ENCODE measurements at regions of chr13 and their contacts with region 1.

Region 1: DNA sequence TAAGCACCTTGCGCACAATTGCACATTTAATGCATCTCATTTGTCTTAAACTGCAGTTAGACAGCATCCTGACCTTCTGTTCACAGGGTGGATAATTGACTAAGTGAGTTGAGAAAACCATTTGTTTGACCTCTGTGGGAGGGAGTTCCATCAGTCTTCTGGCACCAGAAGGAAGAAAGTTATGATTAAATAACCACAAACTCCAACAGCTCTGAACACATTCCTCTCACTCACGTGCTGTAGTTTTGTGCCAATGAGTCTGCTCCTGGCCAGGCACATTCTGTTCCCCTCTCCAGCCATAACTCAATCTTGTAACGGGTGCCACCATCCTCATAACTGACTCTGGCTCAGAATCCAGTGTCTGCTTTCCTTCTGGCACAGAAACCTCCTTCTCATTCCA is 817.2 kb downstream of the SLITRK1 start:
- DNase-seq: peak; percentile 93
- H3K4me3 ChIP-seq: no peak overlapping the region
- H3K27ac ChIP-seq: peak overlapping the region; percentile 63 to 76 (median 73)
- H3K4me1 ChIP-seq: peaks cover 0 to 50% (median 21%) of the 10 kb centered on the region in 4 donors
- H3K27me3 ChIP-seq: no peaks in the 10 kb centered on the region
- CTCF ChIP-seq: no peak
- EP300 ChIP-seq: peak; percentile 99 to 100 (median 99)
- POLR2A ChIP-seq: no peak

Region 2: DNA sequence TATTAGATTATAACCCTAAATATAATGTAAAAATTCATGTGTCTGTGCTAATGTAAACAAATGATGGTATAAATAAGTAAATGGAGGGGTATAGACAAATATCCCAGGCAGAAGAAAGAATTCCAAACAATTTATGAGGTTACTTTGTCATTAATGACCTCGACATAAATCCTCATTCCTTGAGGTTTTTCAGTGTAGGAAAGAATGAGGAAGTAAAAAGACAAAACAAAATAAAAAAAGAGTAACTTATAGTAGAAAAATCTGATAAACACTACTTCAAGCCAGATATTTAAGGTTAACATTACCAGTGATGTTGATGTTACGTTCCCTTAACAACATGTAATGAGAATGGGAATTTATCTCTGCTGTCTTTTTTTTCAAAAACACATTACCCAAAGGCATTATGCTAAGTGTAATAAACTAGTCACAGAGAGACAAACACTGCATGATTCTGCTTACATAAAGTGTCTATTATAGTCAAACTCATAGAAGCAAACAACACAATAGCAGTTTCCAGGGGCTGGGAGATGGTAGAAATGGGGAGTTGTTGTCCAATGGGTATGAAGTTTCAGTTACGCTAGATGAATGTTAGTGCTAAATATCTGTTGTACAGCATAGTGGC is 117.9 kb before region 1 on chr13:
- intact Hi-C with region 1: loop called (anchors 10 kb)
- DNase-seq: no peak
- H3K4me3 ChIP-seq: no peak overlapping the region
- H3K27ac ChIP-seq: no peak overlapping the region
- H3K4me1 ChIP-seq: peaks cover 0 to 11% (median 0%) of the 10 kb centered on the region in 4 donors
- H3K27me3 ChIP-seq: no peaks in the 10 kb centered on the region
- CTCF ChIP-seq: no peak
- EP300 ChIP-seq: no peak
- POLR2A ChIP-seq: no peak

Region 3: DNA sequence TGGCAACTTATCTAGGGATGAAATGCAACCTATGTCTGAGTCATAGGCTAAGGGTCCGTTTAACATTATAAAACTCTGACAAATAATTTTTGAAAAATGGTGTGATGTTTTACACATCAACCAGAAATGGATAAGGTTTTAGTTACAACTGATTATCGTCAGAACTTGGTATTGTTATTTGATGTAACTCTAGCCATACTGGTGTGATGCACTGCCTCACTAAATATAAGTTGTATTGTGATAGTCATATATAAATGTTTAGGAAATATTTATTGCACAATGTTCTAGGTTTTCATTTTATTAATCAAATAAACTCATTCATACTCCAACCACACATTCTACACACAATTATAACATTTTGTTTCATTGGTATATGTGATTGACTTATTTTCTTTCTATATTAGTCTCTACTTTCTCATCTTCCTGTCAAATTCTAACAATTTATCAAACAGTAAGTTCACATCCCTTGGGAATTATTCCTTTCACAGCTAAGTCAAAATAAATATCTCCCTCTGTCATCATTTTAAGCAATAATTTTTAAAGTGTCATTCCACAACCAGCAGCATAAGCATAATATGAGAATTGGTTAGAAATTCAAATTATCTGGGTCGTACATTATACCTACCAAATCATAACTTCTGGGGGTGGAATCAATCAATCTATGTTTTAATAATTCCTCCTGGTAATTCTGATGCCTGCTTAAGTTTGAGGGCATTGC is 56.7 kb before region 1 on chr13:
- intact Hi-C with region 1: loop called (anchors 2 kb)
- DNase-seq: no peak
- H3K4me3 ChIP-seq: no peak overlapping the region
- H3K27ac ChIP-seq: peak overlapping the region in 2 of 4 donors; percentile 24 to 40
- H3K4me1 ChIP-seq: peaks cover 0 to 43% (median 8%) of the 10 kb centered on the region in 4 donors
- H3K27me3 ChIP-seq: no peaks in the 10 kb centered on the region
- CTCF ChIP-seq: no peak
- EP300 ChIP-seq: no peak
- POLR2A ChIP-seq: no peak

Region 4: GRCh38 chr13:83229574-83230305 is 164.6 kb after region 1 on chr13:
- intact Hi-C with region 1: no loop called
- DNase-seq: no peak
- H3K4me3 ChIP-seq: no peak overlapping the region
- H3K27ac ChIP-seq: no peak overlapping the region
- H3K4me1 ChIP-seq: no peaks in the 10 kb centered on the region
- H3K27me3 ChIP-seq: no peaks in the 10 kb centered on the region
- CTCF ChIP-seq: no peak
- EP300 ChIP-seq: no peak
- POLR2A ChIP-seq: no peak